ENCODE measurements at regions of chr18 and their contacts with region 1.

Region 1: DNA sequence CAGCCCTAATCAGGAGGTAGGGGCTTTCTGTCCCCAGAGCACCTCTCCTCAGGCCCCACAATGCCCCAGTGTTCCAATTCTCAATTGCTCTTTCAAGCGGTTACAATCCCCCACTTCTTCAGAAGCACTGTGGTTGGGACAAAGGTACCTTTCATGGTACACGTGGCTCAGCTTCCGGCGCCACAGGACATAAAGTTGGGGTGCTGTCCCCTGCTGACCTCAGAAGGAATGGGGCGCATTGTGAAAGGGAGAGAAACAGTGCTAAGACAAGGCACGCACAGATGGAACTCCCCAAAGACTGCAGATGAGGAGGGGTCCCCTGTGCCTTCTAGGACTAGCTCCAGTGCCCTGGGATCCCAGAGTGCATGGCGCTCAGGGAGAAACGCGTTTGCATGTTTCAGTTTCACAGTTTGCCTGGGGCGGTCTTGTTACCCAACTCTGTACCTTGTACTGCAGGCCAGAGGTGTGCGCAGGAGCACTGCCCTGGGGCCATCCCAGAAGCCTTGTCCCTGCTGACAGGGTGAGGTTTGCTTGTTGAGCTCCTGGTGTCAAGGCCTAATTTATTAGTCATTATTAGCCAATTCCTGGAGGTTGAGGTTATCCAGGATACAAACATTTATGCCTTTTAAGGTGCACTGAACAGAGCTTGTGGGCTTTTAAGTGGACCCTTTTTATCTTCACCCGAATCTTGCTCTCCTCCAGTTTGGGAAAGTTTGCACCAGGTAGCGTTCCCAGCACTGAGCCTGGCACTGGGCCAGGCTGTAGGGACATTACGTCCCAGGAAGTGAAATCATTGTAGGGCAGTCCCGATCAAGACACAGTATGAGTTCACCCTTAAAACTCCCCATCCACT is 7.6 kb downstream of the CNDP1 start:
- DNase-seq: no peak
- ATAC-seq: no peak
- H3K4me3 ChIP-seq: no peak overlapping the region
- H3K27ac ChIP-seq: no peak overlapping the region
- H3K4me1 ChIP-seq: no peaks in the 10 kb centered on the region
- H3K27me3 ChIP-seq: no peaks in the 10 kb centered on the region

Region 2: DNA sequence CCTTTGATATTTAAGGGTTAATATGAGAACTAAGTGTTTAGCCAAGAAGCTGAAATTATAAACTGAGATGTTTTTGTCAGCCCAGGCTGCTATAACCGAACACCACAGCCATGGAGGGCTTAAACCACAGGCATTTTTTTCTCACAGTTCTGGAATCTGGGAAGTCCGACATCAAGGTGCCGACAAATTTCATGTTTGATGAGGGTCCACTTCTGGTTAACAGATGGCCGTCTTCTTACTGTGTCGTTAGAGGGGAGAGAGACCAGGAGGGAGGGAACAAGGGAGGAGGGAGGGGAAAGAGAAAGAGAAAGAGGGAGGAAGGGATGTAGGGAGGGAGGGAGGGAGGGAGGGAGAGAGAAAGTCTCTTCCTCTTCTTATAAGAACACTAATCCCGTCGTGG is 52.3 kb before region 1 on chr18:
- intact Hi-C with region 1: no loop called
- DNase-seq: no peak
- ATAC-seq: no peak
- H3K4me3 ChIP-seq: no peak overlapping the region
- H3K27ac ChIP-seq: no peak overlapping the region
- H3K4me1 ChIP-seq: no peaks in the 10 kb centered on the region
- H3K27me3 ChIP-seq: no peaks in the 10 kb centered on the region

Region 3: DNA sequence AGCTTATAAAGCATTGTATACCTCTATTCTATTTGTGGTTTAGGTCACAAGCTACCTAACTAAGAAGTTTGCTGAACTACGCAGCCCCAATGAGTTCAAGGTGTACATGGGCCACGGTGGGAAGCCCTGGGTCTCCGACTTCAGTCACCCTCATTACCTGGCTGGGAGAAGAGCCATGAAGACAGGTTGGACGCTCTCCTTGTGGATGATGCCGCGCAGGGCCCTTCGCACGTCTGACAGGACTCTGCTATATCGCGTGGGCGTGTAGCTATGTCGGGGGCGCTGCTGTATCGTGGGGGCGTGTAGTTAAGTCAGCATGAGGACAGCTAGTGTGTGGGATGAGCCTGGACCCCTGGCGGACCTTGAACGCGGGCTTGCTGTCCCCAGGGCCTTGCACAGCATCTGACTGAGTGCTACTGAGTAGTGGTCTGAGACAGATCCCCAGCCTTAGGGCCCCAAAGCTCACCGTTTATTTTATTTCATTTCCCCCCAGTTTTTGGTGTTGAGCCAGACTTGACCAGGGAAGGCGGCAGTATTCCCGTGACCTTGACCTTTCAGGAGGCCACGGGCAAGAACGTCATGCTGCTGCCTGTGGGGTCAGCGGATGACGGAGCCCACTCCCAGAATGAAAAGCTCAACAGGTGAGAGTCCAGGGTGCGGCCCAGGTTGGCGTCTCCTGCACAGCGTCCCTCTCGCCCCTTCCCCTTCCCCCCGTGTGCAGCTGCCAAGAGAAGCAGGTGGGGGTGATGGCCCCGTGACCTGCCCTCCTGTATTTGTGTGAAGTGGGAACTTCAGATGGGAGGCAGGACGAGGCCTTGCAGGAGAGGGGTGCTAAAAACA is 23.3 kb before region 1 on chr18:
- intact Hi-C with region 1: loop called in 1 of 2 experiments (anchors 1 kb)
- DNase-seq: no peak
- ATAC-seq: no peak
- H3K4me3 ChIP-seq: no peak overlapping the region
- H3K27ac ChIP-seq: no peak overlapping the region
- H3K4me1 ChIP-seq: no peaks in the 10 kb centered on the region
- H3K27me3 ChIP-seq: no peaks in the 10 kb centered on the region